CD8-positive, alpha-beta T cell (primary cell): ENCODE measurements at regions of chr1 and their contacts with region 1.

Region 1: DNA sequence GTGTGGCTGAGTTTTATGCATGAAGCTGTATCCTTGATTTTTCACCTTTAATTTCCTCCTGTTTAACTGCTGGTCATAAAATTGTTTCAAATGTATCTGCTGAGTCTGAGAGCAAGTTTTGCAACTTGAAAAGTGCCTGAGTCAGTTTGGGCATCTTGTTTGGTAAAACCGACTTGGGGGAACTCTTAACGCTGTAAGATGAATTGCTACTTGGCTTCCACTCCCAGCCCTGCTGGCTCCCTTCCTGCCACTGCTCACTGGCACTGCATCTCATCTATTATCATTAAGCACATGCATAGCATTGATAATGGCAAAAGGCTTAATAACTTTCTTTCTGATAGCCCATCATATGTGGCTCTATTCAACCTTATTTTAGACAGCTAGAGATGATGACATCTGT is 35.7 kb upstream of the FAM78B start:
- DNase-seq: no peak
- ATAC-seq: no peak
- H3K4me3 ChIP-seq: no peak overlapping the region
- H3K4me3 Mint-ChIP-seq: no peak overlapping the region
- H3K27ac ChIP-seq: no peak overlapping the region
- H3K27ac Mint-ChIP-seq: no peak overlapping the region
- H3K4me1 ChIP-seq: no peaks in the 10 kb centered on the region
- H3K4me1 Mint-ChIP-seq: no peaks in the 10 kb centered on the region
- H3K27me3 ChIP-seq: no peaks in the 10 kb centered on the region
- H3K27me3 Mint-ChIP-seq: no peaks in the 10 kb centered on the region
- CTCF ChIP-seq: no peak

Region 2: DNA sequence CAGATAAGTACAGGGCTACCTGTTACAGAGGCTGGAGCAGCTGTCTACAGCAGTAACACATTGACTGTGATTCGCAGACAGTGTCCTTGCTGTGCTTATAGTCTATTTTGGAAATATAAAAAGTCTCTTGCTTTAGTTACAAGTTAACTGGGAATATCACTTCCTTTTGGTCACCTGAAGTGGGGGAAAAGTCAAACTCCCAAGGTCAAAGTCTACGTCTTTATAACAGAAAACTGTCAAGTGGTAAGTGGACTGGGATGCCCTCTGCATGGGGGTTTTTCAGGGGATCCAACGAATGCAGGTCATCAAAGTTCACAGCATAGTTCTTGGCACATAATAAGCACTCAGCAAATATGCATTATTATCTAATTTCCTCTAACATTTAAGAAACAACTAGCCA is 91.1 kb before region 1 on chr1:
- CTCF ChIA-PET with region 1: no interaction called
- POLR2A ChIA-PET with region 1: no interaction called
- intact Hi-C with region 1: no loop called
- DNase-seq: no peak
- ATAC-seq: no peak
- H3K4me3 ChIP-seq: no peak overlapping the region
- H3K4me3 Mint-ChIP-seq: no peak overlapping the region
- H3K27ac ChIP-seq: no peak overlapping the region
- H3K27ac Mint-ChIP-seq: no peak overlapping the region
- H3K4me1 ChIP-seq: no peaks in the 10 kb centered on the region
- H3K4me1 Mint-ChIP-seq: no peaks in the 10 kb centered on the region
- H3K27me3 ChIP-seq: no peaks in the 10 kb centered on the region
- H3K27me3 Mint-ChIP-seq: no peaks in the 10 kb centered on the region
- CTCF ChIP-seq: no peak

Region 3: DNA sequence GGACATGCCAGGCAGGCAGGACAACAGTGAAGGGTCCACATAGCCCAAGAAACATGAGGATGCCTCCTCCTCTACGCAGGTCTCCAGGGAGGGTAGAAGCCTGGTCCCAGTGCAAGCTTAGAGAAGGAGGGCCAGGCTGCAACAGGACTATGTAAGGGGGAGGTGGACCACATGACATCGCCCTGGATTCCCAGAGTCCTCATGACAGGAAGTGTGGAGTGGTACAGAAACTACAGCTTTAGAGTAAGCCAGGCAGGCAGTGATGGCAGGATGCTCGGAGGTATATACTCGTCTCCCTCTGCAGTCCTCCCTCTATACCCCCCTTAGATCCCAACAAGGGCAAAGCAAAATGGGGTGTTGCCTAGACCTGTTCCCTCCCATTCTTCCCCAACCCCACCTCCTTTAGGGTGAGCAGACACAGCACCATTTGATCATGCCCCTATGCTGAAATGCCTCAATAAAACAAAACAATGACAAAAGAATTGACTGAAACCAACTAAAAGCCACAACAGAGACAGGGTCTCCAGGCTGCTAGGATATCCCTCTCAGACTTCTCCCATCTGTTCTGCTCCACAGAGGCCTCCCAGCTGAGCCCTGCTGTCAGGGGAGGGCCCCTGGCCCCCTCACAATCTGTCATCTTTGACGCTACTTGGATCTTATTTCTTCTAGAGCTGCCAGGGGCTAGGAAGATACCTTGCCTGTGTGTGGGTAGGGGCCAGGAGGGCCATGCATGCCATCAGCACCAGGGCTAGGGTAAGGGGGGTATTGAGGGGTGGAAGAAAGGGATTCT is 48.8 kb before region 1 on chr1:
- CTCF ChIA-PET with region 1: no interaction called
- POLR2A ChIA-PET with region 1: no interaction called
- intact Hi-C with region 1: loop called in 1 of 2 experiments (anchors 2 kb)
- DNase-seq: no peak
- ATAC-seq: no peak
- H3K4me3 ChIP-seq: no peak overlapping the region
- H3K4me3 Mint-ChIP-seq: no peak overlapping the region
- H3K27ac ChIP-seq: no peak overlapping the region
- H3K27ac Mint-ChIP-seq: no peak overlapping the region
- H3K4me1 ChIP-seq: no peaks in the 10 kb centered on the region
- H3K4me1 Mint-ChIP-seq: no peaks in the 10 kb centered on the region
- H3K27me3 ChIP-seq: no peaks in the 10 kb centered on the region
- H3K27me3 Mint-ChIP-seq: peaks cover 15% of the 10 kb centered on the region
- CTCF ChIP-seq: no peak

Region 4: GRCh38 chr1:166184897-166185296 is 17.6 kb before region 1 on chr1:
- CTCF ChIA-PET with region 1: no interaction called
- POLR2A ChIA-PET with region 1: no interaction called
- intact Hi-C with region 1: no loop called
- DNase-seq: no peak
- ATAC-seq: no peak
- H3K4me3 ChIP-seq: no peak overlapping the region
- H3K4me3 Mint-ChIP-seq: no peak overlapping the region
- H3K27ac ChIP-seq: no peak overlapping the region
- H3K27ac Mint-ChIP-seq: no peak overlapping the region
- H3K4me1 ChIP-seq: no peaks in the 10 kb centered on the region
- H3K4me1 Mint-ChIP-seq: no peaks in the 10 kb centered on the region
- H3K27me3 ChIP-seq: no peaks in the 10 kb centered on the region
- H3K27me3 Mint-ChIP-seq: peaks cover 7% of the 10 kb centered on the region
- CTCF ChIP-seq: no peak